CD4-positive, alpha-beta memory T cell (primary cell): ENCODE measurements at regions of chrX and their contacts with region 1.

Region 1: DNA sequence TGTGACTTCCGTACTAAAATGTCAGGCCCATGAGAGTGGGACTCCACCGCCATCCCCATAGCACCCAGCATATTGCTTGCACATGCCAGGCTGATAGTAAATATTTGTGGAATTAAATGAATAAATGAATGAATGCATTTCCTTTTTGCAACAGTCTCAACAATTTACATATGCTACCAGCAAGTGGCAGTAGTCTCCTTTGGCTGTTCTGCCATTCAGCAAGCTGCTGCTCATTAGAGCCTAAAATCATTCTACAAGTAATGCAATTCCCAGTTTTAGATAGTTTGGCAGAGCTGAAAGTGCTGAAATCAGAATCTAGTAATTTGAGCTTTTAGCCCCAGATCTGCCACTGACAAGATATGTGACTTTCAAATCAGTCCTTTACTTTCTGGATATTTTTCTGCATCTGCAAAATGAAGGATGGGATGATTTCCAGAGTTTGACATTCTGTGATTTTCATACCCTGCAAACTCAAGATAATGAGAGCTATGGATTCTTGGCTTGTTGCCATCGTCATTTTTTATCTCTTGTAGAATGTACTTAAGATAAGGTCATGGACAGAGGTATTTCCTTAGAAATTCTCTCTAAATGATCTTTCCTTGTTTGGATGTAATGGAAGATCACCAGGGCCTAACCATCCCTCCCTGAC is 35.7 kb upstream of the INTS6L start:
- DNase-seq: peak in 4 of 5 donors; percentile 36 to 49 (median 41)
- H3K4me3 ChIP-seq: no peak overlapping the region
- H3K4me3 Mint-ChIP-seq: no peak overlapping the region
- H3K27ac ChIP-seq: no peak overlapping the region
- H3K27ac Mint-ChIP-seq: no peak overlapping the region
- H3K4me1 ChIP-seq: no peaks in the 10 kb centered on the region
- H3K4me1 Mint-ChIP-seq: no peaks in the 10 kb centered on the region
- H3K27me3 ChIP-seq: no peaks in the 10 kb centered on the region
- H3K27me3 Mint-ChIP-seq: no peaks in the 10 kb centered on the region

Region 2: DNA sequence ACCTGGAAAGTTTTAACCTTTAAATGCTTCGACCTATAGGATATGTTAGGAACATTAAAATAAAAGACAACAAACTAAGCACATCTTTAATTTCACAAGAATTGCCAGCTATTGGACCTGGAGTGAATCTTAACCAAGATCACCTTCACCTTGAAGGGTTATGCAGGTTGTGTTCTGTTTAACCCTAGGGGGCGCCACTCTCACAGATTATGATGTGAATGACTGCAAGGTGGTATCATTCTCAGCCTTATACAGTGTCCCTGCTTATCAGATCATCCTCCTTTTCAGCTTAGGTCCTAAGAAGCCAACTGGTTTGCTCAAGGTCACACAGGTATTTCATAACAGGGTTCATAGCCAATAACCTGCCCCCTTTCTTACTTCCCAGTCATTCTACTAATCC is 59.2 kb after region 1 on chrX:
- CTCF ChIA-PET with region 1: interaction called, 4 read pairs
- POLR2A ChIA-PET with region 1: no interaction called
- intact Hi-C with region 1: loop called (anchors 1 kb)
- DNase-seq: peak in 3 of 5 donors; percentile 9 to 38 (median 16)
- H3K4me3 ChIP-seq: no peak overlapping the region
- H3K4me3 Mint-ChIP-seq: no peak overlapping the region
- H3K27ac ChIP-seq: no peak overlapping the region
- H3K27ac Mint-ChIP-seq: no peak overlapping the region
- H3K4me1 ChIP-seq: peaks cover 28% of the 10 kb centered on the region
- H3K4me1 Mint-ChIP-seq: peaks cover 19 to 44% (median 26%) of the 10 kb centered on the region in 4 donors
- H3K27me3 ChIP-seq: no peaks in the 10 kb centered on the region
- H3K27me3 Mint-ChIP-seq: no peaks in the 10 kb centered on the region

Region 3: DNA sequence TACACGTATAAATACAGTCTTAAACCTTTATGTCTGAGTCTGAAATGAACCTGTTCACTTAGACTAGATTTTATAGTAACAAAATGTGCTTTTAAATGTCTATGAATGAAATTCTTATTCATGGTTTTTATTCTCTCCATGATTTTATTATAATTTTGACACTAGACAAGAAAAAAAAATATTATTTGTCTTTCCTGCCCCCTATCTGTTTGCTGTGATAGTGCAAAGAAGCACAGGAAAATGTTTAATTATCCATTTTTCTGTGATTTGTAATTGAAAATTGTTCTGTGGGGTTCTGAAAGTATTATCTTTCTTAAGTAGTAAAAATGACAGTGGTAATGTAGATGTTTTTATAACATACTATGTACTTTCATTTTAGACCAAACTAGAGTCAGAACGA is 87.7 kb after region 1 on chrX:
- CTCF ChIA-PET with region 1: interaction called, 6 read pairs
- POLR2A ChIA-PET with region 1: no interaction called
- intact Hi-C with region 1: loop called (anchors 1 kb)
- DNase-seq: peak in 1 of 5 donors; percentile 3
- H3K4me3 ChIP-seq: no peak overlapping the region
- H3K4me3 Mint-ChIP-seq: no peak overlapping the region
- H3K27ac ChIP-seq: no peak overlapping the region
- H3K27ac Mint-ChIP-seq: peak overlapping the region in 1 of 7 donors; percentile 23
- H3K4me1 ChIP-seq: no peaks in the 10 kb centered on the region
- H3K4me1 Mint-ChIP-seq: no peaks in the 10 kb centered on the region
- H3K27me3 ChIP-seq: no peaks in the 10 kb centered on the region
- H3K27me3 Mint-ChIP-seq: no peaks in the 10 kb centered on the region